Common myeloid progenitor, CD34-positive (primary cell): ENCODE measurements at regions of chr6 and their contacts with region 1.

Region 1: GRCh38 chr6:106300944-106301343 is 24.6 kb downstream of the ATG5 start:
- DNase-seq: peak; percentile 44 to 74 (median 72)
- H3K4me3 ChIP-seq: no peak overlapping the region
- H3K27ac ChIP-seq: no peak overlapping the region
- H3K4me1 ChIP-seq: no peaks in the 10 kb centered on the region
- H3K27me3 ChIP-seq: no peaks in the 10 kb centered on the region

Region 2: DNA sequence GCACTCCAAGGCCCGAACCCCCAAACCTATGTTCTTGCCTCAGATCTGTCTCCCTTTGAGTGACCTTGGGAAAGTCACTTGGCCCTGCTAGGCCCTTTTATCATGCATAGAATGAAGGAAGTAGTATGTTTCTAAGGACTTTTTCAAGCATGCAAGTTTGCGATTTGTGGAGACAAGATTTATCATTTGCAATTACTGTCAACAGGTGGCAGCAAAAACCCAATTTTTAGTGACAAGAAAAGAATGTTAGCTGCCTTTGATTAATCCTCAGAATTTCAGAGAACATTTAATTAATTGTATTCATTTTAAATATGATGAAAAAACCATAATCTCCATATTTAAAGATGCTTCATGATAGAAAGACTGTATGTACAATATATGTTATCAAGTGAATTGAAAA is 869.7 kb before region 1 on chr6:
- CTCF ChIA-PET with region 1: interaction called, 18 read pairs
- POLR2A ChIA-PET with region 1: no interaction called
- DNase-seq: peak; percentile 52 to 75 (median 68)
- H3K4me3 ChIP-seq: no peak overlapping the region
- H3K27ac ChIP-seq: no peak overlapping the region
- H3K4me1 ChIP-seq: no peaks in the 10 kb centered on the region
- H3K27me3 ChIP-seq: no peaks in the 10 kb centered on the region

Region 3: GRCh38 chr6:106085984-106086813 is 214.7 kb before region 1 on chr6 and contains the start of gene PRDM1:
- CTCF ChIA-PET with region 1: interaction called, 15 read pairs
- POLR2A ChIA-PET with region 1: no interaction called
- DNase-seq: peak; percentile 88 to 97 (median 97)
- H3K4me3 ChIP-seq: peak within 1 kb of the TSS; percentile 18 to 83 (median 73)
- H3K27ac ChIP-seq: peak within 1 kb of the TSS in 1 of 2 experiments; percentile 63
- H3K4me1 ChIP-seq: peaks cover 31 to 56% (median 39%) of the 10 kb centered on the region in 4 experiments
- H3K27me3 ChIP-seq: peaks cover 0 to 8% (median 0%) of the 10 kb centered on the region in 5 experiments